ENCODE measurements at regions of chr17 and their contacts with region 1.

Region 1: GRCh38 chr17:73371285-73371684 is 59.5 kb upstream of the CDC42EP4 start:
- DNase-seq: no peak
- H3K4me3 ChIP-seq: no peak overlapping the region
- H3K27ac ChIP-seq: no peak overlapping the region
- H3K4me1 ChIP-seq: peaks cover 6 to 8% of the 10 kb centered on the region in 2 experiments; a peak in 2 of 4 replicates
- H3K27me3 ChIP-seq: 0 out of 2 replicates have a peak, but pooled peaks cover 14% of the 10 kb centered on the region
- CTCF ChIP-seq: no peak
- EP300 ChIP-seq: no peak
- RAD21 ChIP-seq: no peak

Region 2: GRCh38 chr17:73118951-73119391 is 252.3 kb before region 1 on chr17:
- CTCF ChIA-PET with region 1: no interaction called
- POLR2A ChIA-PET with region 1: no interaction called
- DNase-seq: peak; percentile 82
- H3K4me3 ChIP-seq: no peak overlapping the region
- H3K27ac ChIP-seq: peak overlapping the region in 1 of 2 experiments; percentile 75; a peak in 2 of 4 replicates
- H3K4me1 ChIP-seq: peaks cover 0 to 19% of the 10 kb centered on the region in 2 experiments; a peak in 1 of 4 replicates
- H3K27me3 ChIP-seq: no peaks in the 10 kb centered on the region
- CTCF ChIP-seq: no peak
- EP300 ChIP-seq: peak in 1 of 2 experiments; percentile 94; a peak in 2 of 4 replicates
- RAD21 ChIP-seq: peak; percentile 22

Region 3: GRCh38 chr17:73231841-73232586 is 139.3 kb before region 1 on chr17:
- CTCF ChIA-PET with region 1: interaction called, 18 read pairs
- POLR2A ChIA-PET with region 1: interaction called, 4 read pairs
- DNase-seq: peak; percentile 100
- H3K4me3 ChIP-seq: peak overlapping the region; percentile 97 to 98
- H3K27ac ChIP-seq: peak overlapping the region; percentile 59 to 87
- H3K4me1 ChIP-seq: peaks cover 24 to 29% of the 10 kb centered on the region in 2 experiments
- H3K27me3 ChIP-seq: no peaks in the 10 kb centered on the region
- CTCF ChIP-seq: peak; percentile 10; the same call in 1 of the 2 replicates
- EP300 ChIP-seq: peak in 1 of 2 experiments; percentile 47; a peak in 2 of 4 replicates
- RAD21 ChIP-seq: 0 out of 2 replicates have a peak, but pooled peaks have one; percentile 24

Region 4: GRCh38 chr17:73255671-73256181 is 115.6 kb before region 1 on chr17:
- CTCF ChIA-PET with region 1: interaction called, 691 read pairs
- POLR2A ChIA-PET with region 1: interaction called, 15 read pairs
- DNase-seq: peak; percentile 91
- H3K4me3 ChIP-seq: no peak overlapping the region
- H3K27ac ChIP-seq: peak overlapping the region in 1 of 2 experiments; percentile 47; a peak in 2 of 4 replicates
- H3K4me1 ChIP-seq: peaks cover 0 to 14% of the 10 kb centered on the region in 2 experiments; a peak in 1 of 4 replicates
- H3K27me3 ChIP-seq: no peaks in the 10 kb centered on the region
- CTCF ChIP-seq: peak; percentile 100
- EP300 ChIP-seq: peak in 1 of 2 experiments; percentile 94; a peak in 2 of 4 replicates
- RAD21 ChIP-seq: peak; percentile 100

Region 5: GRCh38 chr17:73291260-73291801 is 80.0 kb before region 1 on chr17:
- CTCF ChIA-PET with region 1: interaction called, 12 read pairs
- POLR2A ChIA-PET with region 1: no interaction called
- DNase-seq: no peak
- H3K4me3 ChIP-seq: 0 out of 4 replicates have a peak overlapping the region, but pooled peaks of 1 of the 2 experiments have one; percentile 28
- H3K27ac ChIP-seq: peak overlapping the region in 1 of 2 experiments; percentile 88; a peak in 2 of 4 replicates
- H3K4me1 ChIP-seq: peaks cover 33 to 34% of the 10 kb centered on the region in 2 experiments; a peak in 3 of 4 replicates
- H3K27me3 ChIP-seq: no peaks in the 10 kb centered on the region
- CTCF ChIP-seq: no peak
- EP300 ChIP-seq: peak in 1 of 2 experiments; percentile 83; a peak in 1 of 4 replicates
- RAD21 ChIP-seq: no peak

Region 6: GRCh38 chr17:73311781-73312641 is 59.3 kb before region 1 on chr17 and contains the start of gene CDC42EP4:
- CTCF ChIA-PET with region 1: interaction called, 154 read pairs
- POLR2A ChIA-PET with region 1: interaction called, 30 read pairs
- DNase-seq: peak; percentile 98
- H3K4me3 ChIP-seq: peak within 1 kb of the TSS; percentile 86 to 99
- H3K27ac ChIP-seq: peak within 1 kb of the TSS; percentile 93 to 96
- H3K4me1 ChIP-seq: peaks cover 30 to 35% of the 10 kb centered on the region in 2 experiments; a peak in 3 of 4 replicates
- H3K27me3 ChIP-seq: no peaks in the 10 kb centered on the region
- CTCF ChIP-seq: no peak; the same call in 1 of the 2 replicates
- EP300 ChIP-seq: 0 out of 4 replicates have a peak, but pooled peaks of 1 of the 2 experiments have one; percentile 21
- RAD21 ChIP-seq: no peak; the same call in 1 of the 2 replicates
- polyA plus RNA-seq, gene CDC42EP4: 23.7 and 28.3 TPM in 2 replicates

Region 7: DNA sequence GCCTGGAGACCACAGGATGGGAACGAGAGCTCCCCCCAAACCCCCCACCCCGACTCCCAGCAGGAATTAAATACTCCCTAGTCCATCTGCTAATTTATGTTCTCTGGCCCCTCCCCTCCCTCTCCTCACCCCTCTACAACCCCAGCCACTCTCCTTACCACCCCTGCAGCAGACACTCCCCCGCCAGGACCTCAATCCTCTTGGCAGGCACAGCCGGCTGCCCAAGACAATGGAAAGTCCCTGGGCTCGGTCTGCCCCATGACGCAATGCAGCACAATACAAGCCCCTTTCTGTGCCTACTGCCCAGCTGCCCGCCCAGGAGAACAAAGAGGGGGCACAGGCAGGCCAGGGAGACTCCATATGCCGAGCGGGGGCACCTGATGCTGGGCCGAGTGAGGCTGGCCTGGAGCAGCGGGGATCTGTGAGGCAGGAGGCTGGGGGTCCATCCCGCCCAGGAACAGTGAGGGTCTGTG is 29.2 kb before region 1 on chr17:
- CTCF ChIA-PET with region 1: interaction called, 31 read pairs
- POLR2A ChIA-PET with region 1: interaction called, 4 read pairs
- DNase-seq: peak; percentile 69
- H3K4me3 ChIP-seq: no peak overlapping the region
- H3K27ac ChIP-seq: peak overlapping the region; percentile 70 to 92
- H3K4me1 ChIP-seq: peaks cover 23 to 42% of the 10 kb centered on the region in 2 experiments
- H3K27me3 ChIP-seq: no peaks in the 10 kb centered on the region
- CTCF ChIP-seq: no peak
- EP300 ChIP-seq: peak in 1 of 2 experiments; percentile 9; a peak in 1 of 4 replicates
- RAD21 ChIP-seq: no peak

Region 8: DNA sequence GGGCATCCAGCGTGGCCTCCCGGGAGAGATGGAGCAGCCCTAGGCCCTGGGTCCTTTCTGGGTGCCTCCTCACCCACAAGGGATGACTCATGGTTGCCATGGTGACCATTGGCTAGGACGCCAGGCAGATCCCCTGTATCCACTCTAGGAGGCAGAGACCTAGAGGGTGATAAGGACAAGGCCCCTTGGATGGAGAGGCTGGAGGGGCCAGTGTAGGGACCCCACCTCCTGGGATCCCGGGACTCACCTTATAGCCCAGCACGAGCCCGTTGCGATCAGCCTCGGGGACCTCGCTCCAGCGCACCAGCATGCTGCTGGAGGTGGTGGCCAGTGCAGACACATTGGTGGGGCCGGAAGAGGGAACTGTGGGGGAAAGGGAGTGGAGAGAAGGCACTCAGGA is 22.7 kb after region 1 on chr17:
- CTCF ChIA-PET with region 1: interaction called, 21 read pairs
- POLR2A ChIA-PET with region 1: no interaction called
- DNase-seq: peak; percentile 71
- H3K4me3 ChIP-seq: no peak overlapping the region
- H3K27ac ChIP-seq: no peak overlapping the region
- H3K4me1 ChIP-seq: peaks cover 0 to 4% of the 10 kb centered on the region in 2 experiments; a peak in 1 of 4 replicates
- H3K27me3 ChIP-seq: peaks cover 16% of the 10 kb centered on the region; the same call in 1 of the 2 replicates
- CTCF ChIP-seq: no peak
- EP300 ChIP-seq: no peak
- RAD21 ChIP-seq: no peak

Region 9: GRCh38 chr17:73465675-73466230 is 94.5 kb after region 1 on chr17:
- CTCF ChIA-PET with region 1: no interaction called
- POLR2A ChIA-PET with region 1: no interaction called
- DNase-seq: no peak
- H3K4me3 ChIP-seq: no peak overlapping the region
- H3K27ac ChIP-seq: no peak overlapping the region
- H3K4me1 ChIP-seq: peaks cover 0 to 10% of the 10 kb centered on the region in 2 experiments; a peak in 1 of 4 replicates
- H3K27me3 ChIP-seq: no peaks in the 10 kb centered on the region
- CTCF ChIP-seq: no peak
- EP300 ChIP-seq: no peak
- RAD21 ChIP-seq: no peak

Measured in SK-N-SH (cell line).